Calu3 (cell line): ENCODE measurements at regions of chr14 and their contacts with region 1.

Region 1: GRCh38 chr14:95561001-95561412 is 26.2 kb downstream of the GLRX5 start:
- DNase-seq: peak; percentile 90
- H3K4me3 Mint-ChIP-seq: peak overlapping the region; percentile 33
- H3K27ac Mint-ChIP-seq: no peak overlapping the region
- H3K4me1 Mint-ChIP-seq: peaks cover 7% of the 10 kb centered on the region
- H3K27me3 Mint-ChIP-seq: peaks cover 16% of the 10 kb centered on the region
- CTCF ChIP-seq: peak; percentile 88

Region 2: GRCh38 chr14:95683793-95684192 is 122.8 kb after region 1 on chr14:
- CTCF ChIA-PET with region 1: interaction called, 4 read pairs
- intact Hi-C with region 1: loop called (anchors 1 kb)
- DNase-seq: peak; percentile 42
- H3K4me3 Mint-ChIP-seq: no peak overlapping the region
- H3K27ac Mint-ChIP-seq: no peak overlapping the region
- H3K4me1 Mint-ChIP-seq: no peaks in the 10 kb centered on the region
- H3K27me3 Mint-ChIP-seq: peaks cover 46% of the 10 kb centered on the region
- CTCF ChIP-seq: peak; percentile 51

Region 3: DNA sequence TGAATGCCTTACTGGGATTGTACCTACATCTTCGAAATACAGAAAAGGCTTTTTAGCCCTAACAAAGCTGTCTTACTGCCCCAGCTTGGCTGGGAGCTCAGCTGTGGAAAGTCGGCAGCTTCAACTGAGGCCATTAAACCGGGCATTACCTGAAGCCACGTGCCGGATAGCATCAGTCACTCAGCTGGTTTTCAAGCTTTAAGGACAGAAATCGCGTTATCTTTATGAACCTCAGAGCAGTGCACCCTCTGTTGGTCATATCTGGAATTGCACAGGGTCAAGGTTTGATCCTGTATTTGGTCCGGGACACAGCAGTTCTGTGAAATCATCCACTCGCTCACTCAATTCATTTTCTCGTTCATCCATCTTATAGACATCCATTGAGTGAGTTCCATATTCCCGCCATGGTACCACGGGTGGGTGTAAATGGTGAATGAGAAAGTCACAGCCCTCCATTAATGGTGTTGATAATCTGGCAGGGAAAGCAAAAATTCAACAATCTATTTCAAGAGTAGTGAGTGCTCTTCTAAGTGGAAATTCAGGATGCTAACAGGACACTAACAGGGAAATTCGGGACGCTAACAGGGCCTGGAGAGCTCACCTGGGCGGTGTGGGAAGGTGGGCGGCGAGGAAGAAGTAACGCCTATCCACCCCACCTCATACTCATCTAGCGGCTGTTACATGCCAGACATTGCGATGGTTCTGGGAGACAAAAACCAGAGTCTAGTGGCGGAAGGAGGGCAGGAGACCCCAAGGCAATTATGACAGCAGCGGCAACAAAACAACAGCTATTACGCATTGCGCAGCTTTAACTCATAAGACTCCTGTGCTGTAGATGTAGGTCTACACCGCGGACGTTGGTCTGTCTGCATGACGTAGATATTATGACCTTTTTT is 213.5 kb after region 1 on chr14:
- CTCF ChIA-PET with region 1: interaction called, 3 read pairs
- intact Hi-C with region 1: loop called (anchors 1 kb)
- DNase-seq: peak; percentile 59
- H3K4me3 Mint-ChIP-seq: no peak overlapping the region
- H3K27ac Mint-ChIP-seq: no peak overlapping the region
- H3K4me1 Mint-ChIP-seq: no peaks in the 10 kb centered on the region
- H3K27me3 Mint-ChIP-seq: peaks cover 89% of the 10 kb centered on the region
- CTCF ChIP-seq: peak; percentile 59